CD8-positive, alpha-beta T cell (primary cell): ENCODE measurements at regions of chrX and their contacts with region 1.

Region 1: DNA sequence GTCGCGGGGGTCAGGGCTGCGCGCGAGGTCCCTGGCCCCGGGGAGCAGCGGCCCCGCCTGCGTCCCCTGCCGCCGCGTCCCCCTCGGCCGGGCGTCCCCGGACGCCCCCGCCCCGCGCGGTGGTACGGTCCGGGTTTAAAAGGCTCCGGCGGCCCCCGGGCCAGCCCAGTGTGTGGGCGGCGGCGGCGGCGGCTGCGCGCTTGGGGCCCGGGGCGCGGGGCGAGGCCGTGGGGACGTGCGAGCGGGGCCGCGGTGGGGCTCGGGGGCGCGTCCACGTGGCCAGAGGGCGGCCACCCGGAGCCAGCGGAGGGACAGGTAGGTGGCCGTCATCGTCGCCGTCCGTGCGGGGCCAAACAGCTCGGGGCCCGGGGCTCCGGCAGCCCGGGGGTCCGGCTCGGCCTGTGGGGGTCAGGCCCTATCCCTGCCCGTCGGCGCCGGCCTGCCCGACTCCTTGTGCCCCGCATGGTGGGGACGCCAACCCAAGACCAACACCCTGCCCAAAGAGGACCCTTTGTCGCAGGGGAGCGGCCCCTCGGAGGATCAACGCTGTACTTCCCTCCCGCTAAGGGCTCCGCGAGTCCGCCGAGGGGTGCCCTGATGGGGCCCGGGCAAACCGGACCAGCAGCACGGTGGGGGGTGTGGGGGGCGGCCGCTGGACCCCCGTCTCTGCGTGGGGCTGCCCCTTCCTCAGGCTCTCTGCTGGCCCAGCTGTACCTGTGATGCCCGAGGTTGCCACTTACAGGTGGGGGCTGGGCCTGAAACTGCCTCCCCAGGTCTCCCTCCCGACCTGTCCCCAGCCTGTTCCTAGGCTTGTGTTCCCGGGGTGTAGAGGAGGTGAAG is at the start of gene PLXNA3:
- DNase-seq: peak; percentile 44 to 86 (median 64)
- ATAC-seq: peak; percentile 77
- H3K4me3 ChIP-seq: peak within 1 kb of the TSS; percentile 43 to 63
- H3K4me3 Mint-ChIP-seq: peak within 1 kb of the TSS; percentile 96
- H3K27ac ChIP-seq: peak within 1 kb of the TSS in 1 of 2 experiments; percentile 33
- H3K27ac Mint-ChIP-seq: peak within 1 kb of the TSS; percentile 94
- H3K4me1 ChIP-seq: peaks cover 5% of the 10 kb centered on the region
- H3K4me1 Mint-ChIP-seq: peaks cover 9% of the 10 kb centered on the region
- H3K27me3 ChIP-seq: no peaks in the 10 kb centered on the region
- H3K27me3 Mint-ChIP-seq: no peaks in the 10 kb centered on the region
- CTCF ChIP-seq: no peak
- total RNA-seq, gene PLXNA3: 46.7 to 52.1 TPM

Region 2: DNA sequence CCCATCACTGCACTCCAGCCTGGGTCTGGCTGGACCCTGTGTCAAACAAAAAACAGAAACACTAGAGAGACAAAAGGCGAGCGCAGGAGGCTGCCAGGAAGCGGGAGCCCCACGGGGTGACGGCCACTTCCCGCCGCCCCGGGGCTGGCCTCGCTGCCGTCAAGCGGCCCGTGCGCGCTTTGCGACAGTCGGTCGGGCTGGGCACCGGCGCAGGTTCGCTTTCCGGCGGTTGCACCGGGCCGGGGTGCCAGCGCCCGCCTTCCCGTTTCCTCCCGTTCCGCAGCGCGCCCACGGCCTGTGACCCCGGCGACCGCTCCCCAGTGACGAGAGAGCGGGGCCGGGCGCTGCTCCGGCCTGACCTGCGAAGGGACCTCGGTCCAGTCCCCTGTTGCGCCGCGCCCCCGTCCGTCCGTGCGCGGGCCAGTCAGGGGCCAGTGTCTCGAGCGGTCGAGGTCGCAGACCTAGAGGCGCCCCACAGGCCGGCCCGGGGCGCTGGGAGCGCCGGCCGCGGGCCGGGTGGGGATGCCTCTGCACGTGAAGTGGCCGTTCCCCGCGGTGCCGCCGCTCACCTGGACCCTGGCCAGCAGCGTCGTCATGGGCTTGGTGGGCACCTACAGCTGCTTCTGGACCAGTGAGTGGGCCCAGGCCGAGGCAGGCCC is 46.9 kb before region 1 on chrX and contains the start of gene TAFAZZIN:
- CTCF ChIA-PET with region 1: no interaction called
- POLR2A ChIA-PET with region 1: interaction called, 4 read pairs
- intact Hi-C with region 1: loop called in 1 of 2 experiments (anchors 1 kb)
- DNase-seq: peak; percentile 37 to 87 (median 70)
- ATAC-seq: peak; percentile 79
- H3K4me3 ChIP-seq: peak within 1 kb of the TSS; percentile 49 to 68
- H3K4me3 Mint-ChIP-seq: peak within 1 kb of the TSS; percentile 91
- H3K27ac ChIP-seq: peak within 1 kb of the TSS; percentile 55 to 73
- H3K27ac Mint-ChIP-seq: peak within 1 kb of the TSS; percentile 94
- H3K4me1 ChIP-seq: peaks cover 9% of the 10 kb centered on the region
- H3K4me1 Mint-ChIP-seq: peaks cover 6% of the 10 kb centered on the region
- H3K27me3 ChIP-seq: no peaks in the 10 kb centered on the region
- H3K27me3 Mint-ChIP-seq: no peaks in the 10 kb centered on the region
- CTCF ChIP-seq: no peak
- total RNA-seq, gene TAFAZZIN: 48.9 to 52.3 TPM

Region 3: GRCh38 chrX:154436983-154437719 is 21.2 kb before region 1 on chrX and contains the start of gene GDI1:
- CTCF ChIA-PET with region 1: no interaction called
- POLR2A ChIA-PET with region 1: interaction called, 3 read pairs
- intact Hi-C with region 1: loop called in 1 of 2 experiments (anchors 2 kb)
- DNase-seq: peak in 7 of 9 experiments; percentile 24 to 73 (median 55)
- ATAC-seq: peak; percentile 56
- H3K4me3 ChIP-seq: peak within 1 kb of the TSS; percentile 41 to 58
- H3K4me3 Mint-ChIP-seq: peak within 1 kb of the TSS; percentile 79
- H3K27ac ChIP-seq: peak within 1 kb of the TSS; percentile 30 to 68
- H3K27ac Mint-ChIP-seq: peak within 1 kb of the TSS; percentile 92
- H3K4me1 ChIP-seq: peaks cover 10% of the 10 kb centered on the region
- H3K4me1 Mint-ChIP-seq: peaks cover 28% of the 10 kb centered on the region
- H3K27me3 ChIP-seq: no peaks in the 10 kb centered on the region
- H3K27me3 Mint-ChIP-seq: no peaks in the 10 kb centered on the region
- CTCF ChIP-seq: no peak
- total RNA-seq, gene GDI1: 113 to 119 TPM